Panc1 (cell line): ENCODE measurements at regions of chr11 and their contacts with region 1.

Region 1: GRCh38 chr11:9982800-9983579 is 311.0 kb downstream of the SBF2 start:
- DNase-seq: no peak
- ATAC-seq: peak; percentile 67
- H3K4me3 ChIP-seq: no peak overlapping the region
- H3K27ac ChIP-seq: peak overlapping the region; percentile 85
- H3K4me1 ChIP-seq: peaks cover 12% of the 10 kb centered on the region
- H3K27me3 ChIP-seq: no peaks in the 10 kb centered on the region
- CTCF ChIP-seq: no peak

Region 2: GRCh38 chr11:9838961-9839360 is 144.0 kb before region 1 on chr11:
- CTCF ChIA-PET with region 1: no interaction called
- POLR2A ChIA-PET with region 1: no interaction called
- in situ Hi-C with region 1: no loop called
- intact Hi-C with region 1: no loop called
- DNase-seq: no peak
- ATAC-seq: peak; percentile 84
- H3K4me3 ChIP-seq: no peak overlapping the region
- H3K27ac ChIP-seq: peak overlapping the region; percentile 76
- H3K4me1 ChIP-seq: peaks cover 23% of the 10 kb centered on the region
- H3K27me3 ChIP-seq: no peaks in the 10 kb centered on the region
- CTCF ChIP-seq: no peak

Region 3: DNA sequence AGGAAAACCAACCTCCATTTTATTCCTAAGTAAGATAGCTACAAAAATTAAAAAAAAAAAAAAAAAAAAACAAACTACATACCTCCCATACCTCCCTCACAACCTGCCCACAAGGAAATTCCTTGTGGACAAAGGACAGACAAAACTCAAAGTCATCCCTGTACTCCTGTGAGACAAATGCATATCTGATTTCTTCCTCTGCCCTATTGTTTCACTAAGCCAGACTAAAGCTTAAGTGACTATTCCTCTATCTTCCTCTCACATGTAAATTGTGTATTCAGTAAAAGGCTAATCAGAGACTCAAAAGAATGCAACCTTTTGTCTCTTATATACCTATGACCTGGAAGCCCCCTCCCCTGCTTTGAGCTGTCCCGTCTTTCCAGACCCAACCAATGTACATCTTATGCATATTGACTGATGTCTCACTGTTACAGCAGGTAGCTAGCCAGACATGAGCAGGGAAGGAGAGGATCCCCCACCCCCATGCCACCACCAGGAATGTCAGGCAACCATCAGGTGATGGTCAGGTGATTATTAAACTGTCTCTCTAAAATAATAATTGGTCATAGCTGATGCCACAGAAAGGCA is 21.6 kb after region 1 on chr11:
- CTCF ChIA-PET with region 1: no interaction called
- POLR2A ChIA-PET with region 1: interaction called, 10 read pairs
- in situ Hi-C with region 1: no loop called
- intact Hi-C with region 1: no loop called
- DNase-seq: no peak
- ATAC-seq: no peak
- H3K4me3 ChIP-seq: no peak overlapping the region
- H3K27ac ChIP-seq: peak overlapping the region; percentile 30; the same call in 1 of the 2 replicates
- H3K4me1 ChIP-seq: no peaks in the 10 kb centered on the region; the same call in 1 of the 2 replicates
- H3K27me3 ChIP-seq: no peaks in the 10 kb centered on the region
- CTCF ChIP-seq: no peak

Region 4: GRCh38 chr11:10087186-10087585 is 104.2 kb after region 1 on chr11:
- CTCF ChIA-PET with region 1: no interaction called
- POLR2A ChIA-PET with region 1: no interaction called
- in situ Hi-C with region 1: no loop called
- intact Hi-C with region 1: no loop called
- DNase-seq: no peak
- ATAC-seq: peak; percentile 53; the same call in 1 of the 2 replicates
- H3K4me3 ChIP-seq: no peak overlapping the region
- H3K27ac ChIP-seq: peak overlapping the region; percentile 69
- H3K4me1 ChIP-seq: peaks cover 24% of the 10 kb centered on the region; the same call in 1 of the 2 replicates
- H3K27me3 ChIP-seq: no peaks in the 10 kb centered on the region
- CTCF ChIP-seq: no peak